CD8-positive, alpha-beta T cell (primary cell): ENCODE measurements at regions of chr3 and their contacts with region 1.

Region 1: GRCh38 chr3:4387210-4388204 is 79.6 kb downstream of the SUMF1 start:
- DNase-seq: no peak
- ATAC-seq: no peak
- H3K4me3 ChIP-seq: no peak overlapping the region
- H3K4me3 Mint-ChIP-seq: no peak overlapping the region
- H3K27ac ChIP-seq: no peak overlapping the region
- H3K27ac Mint-ChIP-seq: no peak overlapping the region
- H3K4me1 ChIP-seq: no peaks in the 10 kb centered on the region
- H3K4me1 Mint-ChIP-seq: no peaks in the 10 kb centered on the region
- H3K27me3 ChIP-seq: no peaks in the 10 kb centered on the region
- H3K27me3 Mint-ChIP-seq: no peaks in the 10 kb centered on the region
- CTCF ChIP-seq: no peak

Region 2: GRCh38 chr3:3538451-3538850 is 849.1 kb before region 1 on chr3:
- CTCF ChIA-PET with region 1: no interaction called
- POLR2A ChIA-PET with region 1: no interaction called
- intact Hi-C with region 1: no loop called
- DNase-seq: no peak
- ATAC-seq: no peak
- H3K4me3 ChIP-seq: no peak overlapping the region
- H3K4me3 Mint-ChIP-seq: no peak overlapping the region
- H3K27ac ChIP-seq: no peak overlapping the region
- H3K27ac Mint-ChIP-seq: no peak overlapping the region
- H3K4me1 ChIP-seq: no peaks in the 10 kb centered on the region
- H3K4me1 Mint-ChIP-seq: no peaks in the 10 kb centered on the region
- H3K27me3 ChIP-seq: no peaks in the 10 kb centered on the region
- H3K27me3 Mint-ChIP-seq: no peaks in the 10 kb centered on the region
- CTCF ChIP-seq: no peak

Region 3: GRCh38 chr3:4406746-4407568 is 19.4 kb after region 1 on chr3:
- CTCF ChIA-PET with region 1: no interaction called
- POLR2A ChIA-PET with region 1: no interaction called
- intact Hi-C with region 1: loop called in 1 of 2 experiments (anchors 1 kb)
- DNase-seq: peak in 1 of 9 experiments; percentile 12
- ATAC-seq: no peak
- H3K4me3 ChIP-seq: no peak overlapping the region
- H3K4me3 Mint-ChIP-seq: no peak overlapping the region
- H3K27ac ChIP-seq: no peak overlapping the region
- H3K27ac Mint-ChIP-seq: no peak overlapping the region
- H3K4me1 ChIP-seq: no peaks in the 10 kb centered on the region
- H3K4me1 Mint-ChIP-seq: peaks cover 13% of the 10 kb centered on the region
- H3K27me3 ChIP-seq: no peaks in the 10 kb centered on the region
- H3K27me3 Mint-ChIP-seq: no peaks in the 10 kb centered on the region
- CTCF ChIP-seq: no peak